ENCODE measurements at regions of chr21 and their contacts with region 1.

Region 1: DNA sequence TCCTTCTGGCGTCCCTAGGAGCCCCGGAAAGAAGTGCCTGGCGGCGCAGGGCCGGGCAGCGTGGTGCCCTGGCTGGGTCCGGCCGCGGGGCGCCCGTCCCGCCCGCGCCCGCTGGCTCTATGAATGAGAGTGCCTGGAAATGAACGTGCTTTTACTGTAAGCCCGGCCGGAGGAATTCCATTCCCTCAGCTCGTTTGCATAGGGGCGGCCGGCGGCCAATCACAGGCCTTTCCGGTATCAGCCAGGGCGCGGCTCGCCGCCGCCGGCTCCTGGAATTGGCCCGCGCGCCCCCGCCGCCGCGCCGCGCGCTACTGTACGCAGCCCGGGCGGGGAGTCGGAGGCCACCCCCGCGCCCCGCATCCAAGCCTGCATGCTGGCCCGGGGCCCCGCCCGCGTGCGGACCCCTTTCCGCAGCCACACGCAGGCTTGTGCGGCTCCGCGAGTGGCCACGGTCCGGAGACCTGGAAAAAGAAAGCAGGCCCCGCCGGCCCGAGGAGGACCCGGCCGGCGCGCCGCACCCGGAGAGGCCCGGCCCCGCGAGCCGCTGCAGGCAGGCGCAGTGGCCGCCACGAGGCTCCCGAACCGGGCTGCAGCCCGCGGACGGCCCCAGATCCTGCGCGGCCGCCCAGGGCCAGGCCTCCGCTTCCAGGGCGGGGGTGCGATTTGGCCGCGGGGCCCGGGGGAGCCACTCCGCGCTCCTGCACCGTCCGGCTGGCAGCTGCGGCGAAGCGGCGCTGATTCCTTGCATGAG is 160.4 kb downstream of the RUNX1 start:
- DNase-seq: peak; percentile 93
- ATAC-seq: peak; percentile 56
- H3K4me3 Mint-ChIP-seq: peak overlapping the region; percentile 92
- H3K27ac Mint-ChIP-seq: peak overlapping the region; percentile 100
- H3K4me1 Mint-ChIP-seq: peaks cover 37% of the 10 kb centered on the region
- H3K27me3 Mint-ChIP-seq: no peaks in the 10 kb centered on the region

Region 2: GRCh38 chr21:34745557-34746255 is 143.0 kb before region 1 on chr21:
- CTCF ChIA-PET with region 1: interaction called, 9 read pairs
- POLR2A ChIA-PET with region 1: interaction called, 5 read pairs
- intact Hi-C with region 1: loop called (anchors 1 to 2 kb)
- DNase-seq: peak; percentile 77
- ATAC-seq: peak; percentile 93
- H3K4me3 Mint-ChIP-seq: no peak overlapping the region
- H3K27ac Mint-ChIP-seq: peak overlapping the region; percentile 35
- H3K4me1 Mint-ChIP-seq: peaks cover 5% of the 10 kb centered on the region
- H3K27me3 Mint-ChIP-seq: peaks cover 1% of the 10 kb centered on the region

Region 3: GRCh38 chr21:34967509-34968289 is 79.0 kb after region 1 on chr21:
- CTCF ChIA-PET with region 1: interaction called, 14 read pairs
- POLR2A ChIA-PET with region 1: interaction called, 7 read pairs
- intact Hi-C with region 1: loop called (anchors 1 kb)
- DNase-seq: peak; percentile 73
- ATAC-seq: peak; percentile 70
- H3K4me3 Mint-ChIP-seq: peak overlapping the region; percentile 61
- H3K27ac Mint-ChIP-seq: peak overlapping the region; percentile 99
- H3K4me1 Mint-ChIP-seq: peaks cover 91% of the 10 kb centered on the region
- H3K27me3 Mint-ChIP-seq: no peaks in the 10 kb centered on the region

Region 4: GRCh38 chr21:35095859-35096291 is 207.1 kb after region 1 on chr21:
- CTCF ChIA-PET with region 1: interaction called, 3 read pairs
- POLR2A ChIA-PET with region 1: interaction called, 4 read pairs
- intact Hi-C with region 1: loop called (anchors 2 kb)
- DNase-seq: peak; percentile 20
- ATAC-seq: peak; percentile 25
- H3K4me3 Mint-ChIP-seq: no peak overlapping the region
- H3K27ac Mint-ChIP-seq: peak overlapping the region; percentile 86
- H3K4me1 Mint-ChIP-seq: peaks cover 50% of the 10 kb centered on the region
- H3K27me3 Mint-ChIP-seq: peaks cover 2% of the 10 kb centered on the region

Region 5: GRCh38 chr21:35400233-35400957 is 511.7 kb after region 1 on chr21:
- CTCF ChIA-PET with region 1: interaction called, 9 read pairs
- POLR2A ChIA-PET with region 1: interaction called, 3 read pairs
- intact Hi-C with region 1: loop called (anchors 1 to 5 kb)
- DNase-seq: peak; percentile 42
- ATAC-seq: peak; percentile 89
- H3K4me3 Mint-ChIP-seq: peak overlapping the region; percentile 33
- H3K27ac Mint-ChIP-seq: peak overlapping the region; percentile 82
- H3K4me1 Mint-ChIP-seq: peaks cover 28% of the 10 kb centered on the region
- H3K27me3 Mint-ChIP-seq: peaks cover 2% of the 10 kb centered on the region

Region 6: DNA sequence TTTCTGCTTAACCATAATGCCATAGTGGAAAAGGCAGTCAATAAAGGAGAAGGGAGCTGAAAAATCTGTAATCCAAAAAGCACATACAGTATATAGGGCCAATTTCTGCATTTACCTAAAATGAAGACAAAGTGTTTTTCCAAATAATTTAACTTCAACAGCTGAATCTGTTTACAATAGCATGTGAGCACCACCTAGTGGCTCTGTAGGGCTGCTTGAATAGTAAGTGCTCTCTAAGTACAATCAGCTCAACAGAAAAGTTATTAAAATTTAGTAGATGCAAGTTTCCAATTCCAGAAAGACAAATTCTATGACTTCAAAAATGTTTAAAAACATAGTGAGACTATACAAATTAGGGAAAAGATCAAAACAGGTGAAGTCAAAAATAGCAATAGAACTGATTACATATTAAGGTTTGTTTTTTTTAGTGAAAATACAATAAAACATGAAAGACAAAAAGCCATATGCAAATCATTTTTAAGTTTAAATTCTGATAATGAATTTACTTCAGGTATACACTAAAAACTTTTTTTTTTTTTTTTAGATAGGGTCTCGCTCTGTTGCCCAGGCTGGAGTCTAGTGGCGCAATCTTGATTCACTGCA is 951.6 kb after region 1 on chr21:
- CTCF ChIA-PET with region 1: interaction called, 4 read pairs
- POLR2A ChIA-PET with region 1: no interaction called
- intact Hi-C with region 1: loop called (anchors 5 kb)
- DNase-seq: peak; percentile 73
- ATAC-seq: no peak
- H3K4me3 Mint-ChIP-seq: no peak overlapping the region
- H3K27ac Mint-ChIP-seq: no peak overlapping the region
- H3K4me1 Mint-ChIP-seq: peaks cover 2% of the 10 kb centered on the region
- H3K27me3 Mint-ChIP-seq: no peaks in the 10 kb centered on the region

Measured in activated CD4-positive, alpha-beta T cell treated with anti-CD3 and anti-CD28 coated beads for 36 hours (primary cell).